ENCODE measurements at regions of chr6 and their contacts with region 1.

Region 1: DNA sequence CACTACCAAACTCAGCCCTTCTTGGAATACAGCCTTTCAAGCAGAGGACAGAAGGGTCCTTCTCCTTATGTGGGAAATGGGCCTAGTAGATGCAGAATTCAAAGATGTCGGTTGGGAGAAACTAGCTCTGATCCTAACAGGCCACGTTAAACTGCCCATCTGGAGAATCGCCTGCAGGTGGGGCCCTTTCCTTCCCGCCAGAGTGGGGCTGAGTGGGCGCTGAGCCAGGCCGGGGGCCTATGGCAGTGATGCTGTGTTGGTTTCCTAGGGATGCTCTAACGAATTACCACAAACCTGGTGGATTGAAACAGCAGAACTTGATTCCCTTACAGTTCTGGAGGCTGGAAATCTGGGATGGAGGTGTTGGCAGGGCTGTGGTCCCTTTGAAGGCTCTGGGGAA is 9.1 kb downstream of the MAPK13 start:
- DNase-seq: peak; percentile 32
- H3K4me3 Mint-ChIP-seq: no peak overlapping the region
- H3K27ac Mint-ChIP-seq: peak overlapping the region; percentile 58
- H3K4me1 Mint-ChIP-seq: peaks cover 28% of the 10 kb centered on the region
- H3K27me3 Mint-ChIP-seq: no peaks in the 10 kb centered on the region

Region 2: DNA sequence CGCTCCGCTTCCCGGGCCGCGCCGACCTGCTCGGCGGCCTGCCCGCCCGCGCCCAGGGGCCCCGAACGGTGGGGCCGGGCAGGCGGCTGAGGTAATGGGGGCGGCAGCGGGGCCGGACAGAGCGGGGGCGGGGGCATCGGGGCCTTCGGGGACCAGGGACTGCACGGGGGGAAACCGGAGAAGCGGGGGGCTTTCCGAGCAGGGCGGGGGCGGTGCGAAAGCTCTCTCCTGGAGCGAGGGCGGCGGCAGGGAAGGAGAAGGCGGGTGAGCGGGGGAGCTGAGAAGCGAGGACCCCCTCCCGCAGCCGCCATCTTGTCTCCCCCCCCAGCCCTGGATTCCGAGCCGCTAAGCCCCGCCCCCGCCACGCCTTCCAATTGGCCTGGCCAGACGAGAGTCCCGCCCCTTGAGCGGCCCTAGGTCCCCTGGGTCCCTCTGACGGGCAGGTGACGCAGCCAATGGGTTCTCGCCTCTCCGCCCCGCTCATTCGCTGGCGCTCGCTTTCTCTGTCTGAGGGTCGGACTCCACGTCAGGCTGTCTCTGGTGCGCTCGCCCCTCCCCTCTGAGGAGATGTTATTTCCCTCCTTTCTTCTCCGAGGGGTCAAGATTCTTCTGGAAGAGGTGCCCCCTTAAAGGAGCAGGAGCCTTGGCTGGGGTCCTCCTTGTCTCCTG is 57.6 kb after region 1 on chr6:
- CTCF ChIA-PET with region 1: interaction called, 10 read pairs
- POLR2A ChIA-PET with region 1: interaction called, 3 read pairs
- intact Hi-C with region 1: no loop called
- DNase-seq: peak; percentile 100
- H3K4me3 Mint-ChIP-seq: peak overlapping the region; percentile 82
- H3K27ac Mint-ChIP-seq: peak overlapping the region; percentile 90
- H3K4me1 Mint-ChIP-seq: peaks cover 46% of the 10 kb centered on the region
- H3K27me3 Mint-ChIP-seq: no peaks in the 10 kb centered on the region

Measured in activated CD4-positive, alpha-beta memory T cell treated with anti-CD3 and anti-CD28 coated beads for 36 hours (primary cell).